ENCODE measurements at regions of chr22 and their contacts with region 1.

Region 1: DNA sequence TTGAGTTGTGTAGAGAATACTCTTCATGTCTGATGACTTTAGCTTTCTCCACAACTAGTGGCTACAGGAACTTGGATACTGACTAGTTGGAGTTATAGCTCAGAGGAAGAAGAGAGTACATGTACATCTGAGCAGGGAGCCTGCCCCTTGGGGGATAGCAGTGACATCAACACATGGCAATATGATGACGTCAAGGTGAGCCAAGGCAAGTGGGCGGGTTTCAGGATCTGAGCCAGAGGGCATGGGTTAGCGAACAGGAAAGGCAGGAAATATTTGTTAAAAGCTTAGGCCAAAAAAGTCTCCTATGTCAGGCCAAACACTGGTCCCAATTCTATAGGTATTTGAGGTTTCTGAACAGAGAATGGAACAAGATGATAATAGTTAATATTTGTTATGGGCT is 42.0 kb upstream of the HORMAD2 start:
- DNase-seq: no peak
- CTCF ChIP-seq: no peak

Region 2: DNA sequence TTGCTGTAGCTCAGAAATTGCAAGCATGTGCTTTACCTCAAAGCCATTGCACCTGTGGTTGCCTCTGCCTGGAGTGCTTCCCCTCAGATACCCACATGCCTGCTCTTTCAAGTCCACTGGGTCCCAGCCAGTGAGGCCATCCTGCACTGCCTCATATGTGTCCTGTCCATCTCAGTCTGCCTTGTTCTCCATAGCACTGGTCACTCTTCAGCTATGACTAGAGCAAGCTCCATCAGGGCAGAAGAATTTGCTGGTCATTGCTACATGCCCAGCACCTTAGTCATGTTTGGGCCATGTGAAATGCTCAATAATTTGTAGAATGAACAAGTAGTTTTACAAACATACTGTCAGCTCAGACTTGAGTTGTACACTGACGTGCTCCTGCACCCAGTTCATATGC is 22.4 kb before region 1 on chr22:
- CTCF ChIA-PET with region 1: no interaction called
- POLR2A ChIA-PET with region 1: interaction called, 13 read pairs
- DNase-seq: no peak
- CTCF ChIP-seq: no peak

Region 3: DNA sequence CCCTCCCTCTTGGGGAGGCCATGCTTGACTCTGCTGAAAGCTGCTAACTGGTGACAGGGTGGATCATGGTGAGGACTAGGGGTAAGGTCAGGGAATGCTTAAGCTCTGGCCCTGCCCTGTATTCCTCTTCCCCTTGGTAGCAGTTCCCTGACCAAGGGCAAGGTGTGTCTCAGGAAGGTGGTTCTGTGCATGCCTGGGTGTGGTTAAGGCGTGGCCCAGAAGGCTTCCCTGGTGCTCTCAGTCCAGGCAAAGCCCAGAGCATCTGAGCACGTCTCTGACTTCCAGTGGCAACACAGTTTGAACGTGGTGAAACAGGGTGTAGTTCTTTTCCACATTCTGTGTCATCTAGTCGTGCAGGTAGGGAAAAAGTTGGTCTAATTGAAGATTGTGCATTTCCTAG is 11.1 kb before region 1 on chr22:
- CTCF ChIA-PET with region 1: no interaction called
- POLR2A ChIA-PET with region 1: no interaction called
- DNase-seq: no peak
- CTCF ChIP-seq: no peak

Measured in GM10248 (cell line).